ENCODE measurements at regions of chr1 and their contacts with region 1.

Region 1: DNA sequence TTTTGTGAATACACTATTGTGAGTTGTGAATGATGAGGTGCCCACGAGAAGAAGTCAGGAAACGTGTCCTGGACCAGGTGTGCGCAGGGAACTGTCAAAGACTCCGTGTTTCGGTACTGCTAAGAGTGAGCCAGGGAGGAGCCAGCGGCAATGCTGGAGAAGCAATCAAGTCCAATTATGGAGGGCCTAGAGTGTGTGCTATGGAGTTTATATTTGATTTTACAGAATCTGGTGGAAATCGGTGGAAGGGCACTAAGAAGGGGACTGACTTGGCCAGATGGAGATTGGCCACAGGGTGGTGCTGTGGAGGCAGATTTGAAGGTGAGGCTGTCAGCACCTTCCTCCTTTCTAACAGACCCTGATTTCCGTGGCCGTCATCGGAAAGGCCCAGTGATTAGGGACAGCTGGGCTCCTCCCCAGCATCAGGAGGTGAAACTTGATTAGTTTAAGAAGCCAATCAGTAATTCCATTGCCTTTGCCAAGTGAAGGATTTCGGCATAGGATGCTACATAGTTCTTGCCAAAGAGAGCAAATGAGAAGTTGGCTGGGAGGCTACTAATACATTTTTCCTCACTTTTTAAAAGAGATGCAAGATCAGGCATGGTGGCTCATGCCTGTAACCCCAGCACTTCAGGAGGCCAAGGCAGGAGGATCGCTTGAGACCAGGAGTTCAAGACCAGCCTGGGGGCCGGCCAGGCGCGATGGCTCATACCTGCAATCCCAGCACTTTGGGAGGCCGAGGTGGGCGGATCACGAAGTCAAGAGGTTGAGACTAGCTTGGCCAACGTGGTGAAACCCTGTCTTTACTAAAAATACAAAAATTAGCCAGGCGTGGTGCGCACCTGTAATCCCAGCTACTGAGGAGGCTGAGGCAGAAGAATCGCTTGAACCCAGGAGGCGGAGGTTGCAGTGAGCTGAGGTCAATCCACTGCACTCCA is 7.0 kb downstream of the PTCH2 start:
- DNase-seq: peak; percentile 82 to 94
- ATAC-seq: peak; percentile 90

Region 2: DNA sequence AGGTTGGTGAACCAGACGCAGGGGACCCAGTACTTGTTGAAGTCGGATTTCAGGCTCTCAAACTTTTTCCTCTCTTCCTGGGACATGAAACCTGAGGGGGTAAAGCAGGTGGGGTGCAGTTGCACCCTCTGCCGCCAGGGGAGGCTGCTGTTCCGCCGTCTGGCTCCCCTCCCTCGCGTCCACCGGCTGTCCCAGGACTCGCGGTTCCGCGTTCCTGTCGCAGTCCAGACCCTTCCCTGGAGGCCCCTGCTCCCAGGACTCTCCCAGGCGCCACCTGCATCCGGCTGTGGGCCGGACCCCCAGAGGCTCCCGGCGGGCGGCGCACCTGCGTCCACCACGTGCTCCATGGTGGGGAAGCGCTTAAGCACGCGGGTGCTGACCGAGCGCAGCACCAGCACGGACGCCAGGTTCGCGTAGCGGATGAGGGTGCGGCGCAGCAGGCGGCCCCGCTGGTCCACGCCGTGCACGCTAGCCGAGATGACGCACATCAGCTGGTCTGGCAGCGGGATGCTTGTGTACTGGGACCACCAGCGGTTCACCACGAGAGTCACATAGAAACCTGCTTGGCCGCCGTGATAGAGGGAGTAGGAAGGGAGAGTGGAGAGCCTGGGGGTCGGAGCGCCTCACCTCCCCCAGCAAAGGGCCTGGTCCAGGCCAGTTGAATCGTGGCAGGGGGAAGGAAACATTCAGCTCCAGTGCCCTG is 49.7 kb before region 1 on chr1:
- intact Hi-C with region 1: loop called in 1 of 2 experiments (anchors 10 kb)
- DNase-seq: peak in 1 of 2 donors; percentile 80
- ATAC-seq: peak; percentile 73

Measured in left colon (tissue), 2 donors.